ENCODE measurements at regions of chr9 and their contacts with region 1.

Region 1: GRCh38 chr9:76866689-76867088 is 39.2 kb downstream of the PRUNE2 start:
- DNase-seq: peak; percentile 59
- ATAC-seq: peak; percentile 98
- H3K4me3 ChIP-seq: no peak overlapping the region
- H3K27ac ChIP-seq: no peak overlapping the region
- H3K4me1 ChIP-seq: no peaks in the 10 kb centered on the region
- H3K27me3 ChIP-seq: no peaks in the 10 kb centered on the region
- CTCF ChIP-seq: no peak

Region 2: DNA sequence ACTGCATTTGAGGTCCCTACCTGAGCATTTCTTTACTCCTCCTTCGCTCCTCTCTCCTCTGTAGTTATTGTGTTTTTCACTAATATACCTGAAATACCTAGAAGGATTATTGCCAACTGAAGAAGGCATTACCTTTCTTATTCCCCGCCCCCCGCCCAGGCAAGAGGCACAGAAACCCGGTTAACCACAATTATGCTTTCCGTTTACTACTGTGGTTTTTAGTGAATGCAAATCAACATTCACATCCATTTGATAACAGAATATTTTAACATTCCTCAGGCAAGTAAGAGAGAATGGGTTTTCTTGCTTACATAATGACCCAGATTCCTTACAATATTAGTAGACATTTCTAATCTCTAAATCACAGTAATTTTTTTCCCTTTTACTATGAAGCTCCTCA is 839.3 kb before region 1 on chr9:
- CTCF ChIA-PET with region 1: no interaction called
- POLR2A ChIA-PET with region 1: no interaction called
- in situ Hi-C with region 1: no loop called
- intact Hi-C with region 1: no loop called
- DNase-seq: no peak
- ATAC-seq: no peak
- H3K4me3 ChIP-seq: no peak overlapping the region
- H3K27ac ChIP-seq: no peak overlapping the region
- H3K4me1 ChIP-seq: no peaks in the 10 kb centered on the region
- H3K27me3 ChIP-seq: no peaks in the 10 kb centered on the region
- CTCF ChIP-seq: no peak

Region 3: DNA sequence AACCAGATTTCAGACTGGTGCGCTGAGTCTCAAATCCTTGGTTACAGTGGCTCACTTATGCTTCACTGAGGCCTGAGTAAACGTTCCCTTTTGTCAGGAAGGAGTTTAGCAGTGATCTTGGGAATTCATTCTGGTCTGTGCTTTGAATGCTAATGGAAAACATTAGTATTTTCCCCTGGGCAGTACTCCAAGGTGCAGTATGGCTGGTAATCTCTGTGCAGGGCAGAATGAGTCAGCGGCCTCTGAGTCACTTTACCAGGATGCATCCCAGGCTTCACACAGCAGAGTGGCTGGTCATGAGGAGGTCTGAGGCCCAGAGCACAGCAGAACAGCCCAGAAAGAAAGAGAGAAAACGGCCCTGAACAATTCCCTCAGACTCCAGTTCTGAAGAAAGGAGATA is 48.4 kb before region 1 on chr9:
- CTCF ChIA-PET with region 1: no interaction called
- POLR2A ChIA-PET with region 1: no interaction called
- in situ Hi-C with region 1: no loop called
- intact Hi-C with region 1: loop called (anchors 5 kb)
- DNase-seq: peak; percentile 82
- ATAC-seq: peak; percentile 100
- H3K4me3 ChIP-seq: no peak overlapping the region
- H3K27ac ChIP-seq: peak overlapping the region; percentile 72
- H3K4me1 ChIP-seq: peaks cover 3% of the 10 kb centered on the region; the same call in 1 of the 2 replicates
- H3K27me3 ChIP-seq: no peaks in the 10 kb centered on the region
- CTCF ChIP-seq: no peak